Common myeloid progenitor, CD34-positive (primary cell): ENCODE measurements at regions of chr6 and their contacts with region 1.

Region 1: DNA sequence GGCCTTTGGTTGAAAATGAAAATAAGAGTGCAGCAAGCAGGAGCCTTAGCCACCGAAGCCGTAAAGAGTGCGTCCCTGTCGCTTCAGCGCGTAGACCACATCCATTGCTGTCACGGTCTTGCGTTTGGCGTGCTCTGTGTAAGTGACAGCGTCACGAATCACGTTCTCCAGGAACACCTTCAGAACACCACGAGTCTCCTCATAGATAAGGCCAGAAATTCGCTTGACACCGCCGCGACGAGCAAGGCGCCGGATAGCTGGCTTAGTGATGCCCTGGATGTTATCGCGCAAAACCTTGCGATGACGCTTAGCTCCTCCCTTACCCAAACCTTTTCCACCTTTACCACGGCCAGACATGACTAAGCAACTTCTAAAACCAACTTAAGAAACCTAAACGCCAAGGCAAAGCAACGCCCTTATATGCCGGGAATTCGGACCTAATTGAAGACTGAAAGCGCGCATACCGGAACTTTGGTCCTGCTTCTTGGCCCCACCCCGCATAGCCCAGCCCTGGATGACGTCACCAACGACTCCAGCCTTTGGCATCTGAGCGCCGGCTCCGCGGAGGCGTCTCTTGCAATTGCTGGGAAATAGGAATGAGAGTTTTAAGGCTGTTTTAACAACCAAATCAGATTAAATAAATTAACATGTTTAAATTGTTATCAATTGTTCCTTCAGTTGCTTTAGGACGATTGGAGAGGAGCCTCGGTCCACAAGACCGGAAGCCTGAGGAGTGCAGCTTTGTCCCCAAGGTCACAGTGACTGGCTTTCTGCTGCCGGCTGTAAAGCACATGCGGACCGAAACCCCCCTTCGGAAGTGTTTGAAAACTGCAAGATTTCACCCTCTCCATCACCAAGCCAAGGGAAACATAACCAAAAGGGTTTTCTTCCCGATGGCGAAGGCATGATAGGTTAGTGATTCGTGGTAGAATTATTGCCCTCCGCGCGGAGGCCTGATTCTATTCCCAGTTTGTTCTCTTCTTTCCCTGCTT is 79.6 kb upstream of the BTN3A2 start:
- DNase-seq: peak; percentile 99 to 100 (median 100)
- H3K4me3 ChIP-seq: peak overlapping the region; percentile 47 to 96 (median 79)
- H3K27ac ChIP-seq: peak overlapping the region; percentile 80 to 94
- H3K4me1 ChIP-seq: peaks cover 3 to 26% (median 21%) of the 10 kb centered on the region in 4 experiments
- H3K27me3 ChIP-seq: no peaks in the 10 kb centered on the region

Region 2: GRCh38 chr6:25922301-25922700 is 363.1 kb before region 1 on chr6:
- CTCF ChIA-PET with region 1: no interaction called
- POLR2A ChIA-PET with region 1: no interaction called
- DNase-seq: no peak
- H3K4me3 ChIP-seq: no peak overlapping the region
- H3K27ac ChIP-seq: no peak overlapping the region
- H3K4me1 ChIP-seq: peaks cover 0 to 7% (median 4%) of the 10 kb centered on the region in 4 experiments
- H3K27me3 ChIP-seq: no peaks in the 10 kb centered on the region

Region 3: DNA sequence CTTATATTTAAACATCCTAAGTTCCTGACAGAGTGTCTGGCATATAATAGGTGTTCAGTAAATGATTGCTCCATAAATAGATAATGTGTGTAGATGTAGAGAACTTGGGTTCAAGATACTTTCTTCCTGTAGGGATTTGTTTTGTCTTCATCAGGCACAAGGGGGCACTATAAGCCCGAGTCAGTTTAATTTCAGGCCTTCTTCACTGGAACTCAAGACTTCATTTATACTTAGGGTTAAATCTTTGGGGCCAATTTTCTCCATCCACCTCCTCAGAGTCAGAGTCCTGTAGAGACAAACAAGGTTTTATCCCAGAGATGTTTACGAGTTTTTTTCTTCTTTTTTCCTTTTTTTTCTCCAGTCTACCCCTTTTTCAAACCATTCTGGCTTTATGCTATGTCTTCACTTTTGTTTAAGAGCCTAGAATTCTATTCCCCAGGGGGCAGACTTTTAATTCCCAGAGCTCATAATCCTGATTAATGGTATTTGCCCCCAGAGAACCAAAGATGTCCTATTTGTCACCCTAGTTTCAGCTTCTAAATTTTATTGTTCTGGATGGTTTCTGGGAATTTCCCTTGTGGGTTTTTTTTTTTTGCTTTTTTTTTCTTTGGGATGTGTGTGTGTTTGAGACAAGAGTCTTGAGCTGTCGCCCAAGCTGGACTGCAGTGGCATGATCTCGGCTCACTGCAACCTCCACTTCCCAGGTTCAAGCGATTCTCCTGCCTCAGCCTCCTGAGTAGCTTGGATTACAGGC is 109.8 kb before region 1 on chr6:
- CTCF ChIA-PET with region 1: no interaction called
- POLR2A ChIA-PET with region 1: interaction called, 18 read pairs
- DNase-seq: peak; percentile 82 to 89 (median 85)
- H3K4me3 ChIP-seq: no peak overlapping the region
- H3K27ac ChIP-seq: no peak overlapping the region
- H3K4me1 ChIP-seq: peaks cover 6 to 34% (median 22%) of the 10 kb centered on the region in 4 experiments
- H3K27me3 ChIP-seq: no peaks in the 10 kb centered on the region

Region 4: DNA sequence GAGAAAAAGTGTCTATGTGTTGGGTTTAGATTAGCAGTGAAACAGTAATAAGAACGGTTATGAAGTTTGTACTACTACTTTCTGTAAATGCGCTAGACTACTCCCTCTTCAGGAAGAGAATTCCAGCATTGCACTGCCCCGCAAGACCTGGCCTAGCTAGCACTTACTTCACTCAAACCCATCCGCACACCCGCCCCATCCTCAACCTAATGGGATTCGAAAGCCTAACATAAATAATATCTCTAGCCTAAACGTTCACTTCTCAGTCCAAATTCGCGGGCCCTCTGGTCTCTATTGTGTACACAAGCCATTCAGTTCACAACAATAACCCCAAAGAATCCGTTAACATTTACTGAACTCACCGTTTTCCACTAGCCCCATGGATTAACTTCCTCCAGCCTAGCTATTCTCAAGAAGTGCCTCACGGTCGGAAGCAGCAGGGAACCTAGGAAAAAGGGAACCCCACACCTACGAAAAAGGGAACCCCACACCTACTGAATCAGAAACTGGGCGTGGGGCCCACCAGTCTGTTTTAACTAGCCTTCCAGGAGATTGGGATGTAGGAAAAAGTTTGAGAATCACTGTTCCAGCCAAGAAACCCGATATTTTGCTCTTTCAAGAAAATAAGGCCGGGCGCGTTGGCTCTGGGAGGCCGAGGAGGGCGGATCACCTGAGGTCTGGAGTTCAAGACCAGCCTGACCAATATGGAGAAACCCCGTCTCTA is 34.1 kb after region 1 on chr6:
- CTCF ChIA-PET with region 1: no interaction called
- POLR2A ChIA-PET with region 1: no interaction called
- DNase-seq: no peak
- H3K4me3 ChIP-seq: peak overlapping the region in 2 of 7 experiments; percentile 15 to 16
- H3K27ac ChIP-seq: peak overlapping the region in 1 of 2 experiments; percentile 39
- H3K4me1 ChIP-seq: peaks cover 4 to 12% (median 6%) of the 10 kb centered on the region in 4 experiments
- H3K27me3 ChIP-seq: peaks cover 0 to 19% (median 0%) of the 10 kb centered on the region in 5 experiments